Activated CD4-positive, alpha-beta T cell treated with anti-CD3 and anti-CD28 coated beads for 36 hours (primary cell): ENCODE measurements at regions of chr3 and their contacts with region 1.

Region 1: DNA sequence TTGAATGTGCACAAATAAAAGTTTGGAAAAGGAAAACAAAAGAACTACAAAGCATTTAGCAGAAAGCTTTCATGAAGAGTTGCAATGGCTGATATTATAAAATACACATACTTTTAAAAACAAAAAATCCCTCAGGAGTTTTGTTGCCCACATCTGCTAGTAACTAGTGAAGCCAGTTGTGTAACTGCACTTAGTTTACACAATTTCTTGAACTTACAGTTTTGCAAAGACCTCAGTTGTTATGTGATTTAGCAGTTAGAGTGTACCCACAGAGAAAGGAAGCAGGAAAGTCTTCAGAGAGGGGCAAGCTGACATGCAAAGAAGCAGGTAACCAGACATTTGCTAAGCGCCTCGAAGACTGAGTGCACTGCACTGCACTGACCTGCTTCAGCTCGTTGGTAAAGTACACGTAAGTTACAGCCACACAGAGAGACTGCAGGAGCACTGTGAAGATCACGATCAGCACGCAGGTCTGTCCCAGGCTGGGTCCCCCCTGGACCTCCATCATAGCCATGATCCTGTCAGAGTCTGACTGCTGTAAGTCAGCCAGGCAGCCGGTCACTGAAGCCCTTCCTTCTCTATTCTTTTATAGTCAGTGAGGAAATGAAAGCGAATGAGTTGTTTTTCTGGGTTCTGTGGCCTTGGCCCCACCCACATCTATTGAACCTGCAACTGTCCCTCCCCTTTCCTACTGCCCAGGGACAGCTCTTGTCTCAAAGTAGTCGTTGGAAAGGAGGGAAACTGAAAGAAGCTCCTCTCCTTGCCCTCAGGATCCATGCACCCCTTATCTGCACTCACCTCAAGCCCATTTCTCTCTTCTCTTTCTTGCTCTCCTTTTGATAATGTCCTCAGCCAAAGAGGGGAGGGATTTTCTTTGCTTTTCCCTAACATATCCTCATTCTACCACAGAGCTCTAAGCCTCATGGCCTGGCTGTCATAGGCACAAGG is at the start of gene TNFSF10:
- DNase-seq: peak; percentile 81
- ATAC-seq: peak; percentile 80
- H3K4me3 Mint-ChIP-seq: peak within 1 kb of the TSS; percentile 91
- H3K27ac Mint-ChIP-seq: peak within 1 kb of the TSS; percentile 95
- H3K4me1 Mint-ChIP-seq: peaks cover 50% of the 10 kb centered on the region
- H3K27me3 Mint-ChIP-seq: no peaks in the 10 kb centered on the region
- total RNA-seq, gene TNFSF10: 33.1 to 34.8 TPM

Region 2: DNA sequence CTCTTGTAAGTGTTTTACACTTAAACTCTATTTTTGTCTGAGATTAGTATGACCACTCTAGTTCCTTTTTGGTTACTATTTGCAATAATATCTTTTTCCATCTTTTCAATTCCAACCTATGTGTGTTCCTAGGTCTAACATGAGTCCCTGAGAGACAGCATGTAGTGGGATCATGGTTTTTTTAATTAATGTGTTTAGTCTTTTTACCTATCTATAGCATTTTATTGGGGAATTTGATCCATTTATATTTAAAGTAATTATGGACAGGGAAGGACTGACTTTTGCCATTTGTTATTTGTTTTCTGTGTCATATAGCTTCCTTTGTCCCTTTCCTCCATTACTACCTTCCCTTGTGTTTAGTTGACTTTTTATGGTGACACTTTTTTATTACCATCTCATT is 21.6 kb before region 1 on chr3:
- CTCF ChIA-PET with region 1: no interaction called
- POLR2A ChIA-PET with region 1: no interaction called
- intact Hi-C with region 1: no loop called
- DNase-seq: no peak
- ATAC-seq: no peak
- H3K4me3 Mint-ChIP-seq: no peak overlapping the region
- H3K27ac Mint-ChIP-seq: no peak overlapping the region
- H3K4me1 Mint-ChIP-seq: peaks cover 10% of the 10 kb centered on the region
- H3K27me3 Mint-ChIP-seq: no peaks in the 10 kb centered on the region

Region 3: DNA sequence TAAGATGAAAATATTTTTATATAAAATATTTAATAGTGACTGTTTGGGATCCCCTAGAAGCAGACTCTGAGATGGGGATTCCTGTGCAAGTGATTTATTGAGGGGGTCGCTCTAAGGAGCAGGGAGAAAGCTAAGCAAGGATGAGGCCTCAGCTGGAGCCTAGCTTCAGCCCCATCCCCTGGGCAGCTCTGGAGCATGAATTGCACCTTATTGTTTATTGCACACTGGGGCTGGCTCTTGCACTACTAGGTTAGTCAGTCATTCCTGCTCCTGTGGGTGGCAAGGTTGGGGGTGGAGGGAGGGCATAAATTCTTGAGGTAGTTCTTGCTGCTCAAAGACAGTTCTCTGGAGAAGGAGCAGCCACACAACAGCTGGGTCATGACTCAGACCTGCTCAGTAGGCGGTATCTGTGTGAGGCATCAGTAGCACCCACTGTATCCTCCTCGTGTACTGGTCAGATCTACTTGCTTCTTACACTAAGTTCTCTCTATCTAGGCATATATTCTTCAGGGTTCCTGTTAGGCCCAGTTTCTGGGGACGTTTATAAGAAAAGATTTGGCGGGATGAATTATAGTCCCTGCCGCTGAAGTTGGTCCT is 27.3 kb after region 1 on chr3:
- CTCF ChIA-PET with region 1: interaction called, 3 read pairs
- POLR2A ChIA-PET with region 1: no interaction called
- intact Hi-C with region 1: loop called in 1 of 2 experiments (anchors 2 kb)
- DNase-seq: peak; percentile 92
- ATAC-seq: peak; percentile 100
- H3K4me3 Mint-ChIP-seq: no peak overlapping the region
- H3K27ac Mint-ChIP-seq: peak overlapping the region; percentile 82
- H3K4me1 Mint-ChIP-seq: peaks cover 32% of the 10 kb centered on the region
- H3K27me3 Mint-ChIP-seq: no peaks in the 10 kb centered on the region

Region 4: GRCh38 chr3:172580680-172581401 is 57.7 kb after region 1 on chr3:
- CTCF ChIA-PET with region 1: interaction called, 3 read pairs
- POLR2A ChIA-PET with region 1: no interaction called
- intact Hi-C with region 1: loop called (anchors 1 kb)
- DNase-seq: no peak
- ATAC-seq: peak; percentile 62
- H3K4me3 Mint-ChIP-seq: peak overlapping the region; percentile 20
- H3K27ac Mint-ChIP-seq: peak overlapping the region; percentile 85
- H3K4me1 Mint-ChIP-seq: peaks cover 82% of the 10 kb centered on the region
- H3K27me3 Mint-ChIP-seq: no peaks in the 10 kb centered on the region

Region 5: DNA sequence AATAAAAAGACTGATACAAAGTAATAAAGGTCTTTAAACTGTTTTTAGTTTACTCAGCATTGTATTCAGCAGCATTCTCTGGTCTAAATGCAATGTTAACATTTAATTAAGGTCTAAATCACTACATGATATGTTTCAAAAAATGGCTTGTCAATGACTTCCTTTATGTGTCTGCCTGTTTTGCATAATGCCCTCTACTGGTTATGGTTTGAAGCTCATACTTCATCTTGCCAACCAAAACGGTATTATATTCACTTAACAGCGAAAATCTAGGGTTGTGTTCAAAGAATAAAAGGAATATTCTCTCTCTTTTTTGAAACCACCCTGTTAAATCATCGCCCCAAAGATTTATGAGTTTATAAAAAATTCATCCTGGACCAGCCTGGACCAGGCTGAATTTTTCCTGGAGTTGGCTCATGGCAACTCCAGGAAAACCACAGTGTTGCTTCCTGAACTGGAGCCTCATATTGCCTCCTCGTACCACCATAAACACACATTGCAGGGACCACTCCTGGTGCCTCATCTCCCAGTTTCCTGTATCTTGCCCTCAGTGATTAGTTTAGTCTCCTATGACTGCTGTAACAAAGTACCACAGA is 194.4 kb after region 1 on chr3:
- CTCF ChIA-PET with region 1: no interaction called
- POLR2A ChIA-PET with region 1: no interaction called
- intact Hi-C with region 1: no loop called
- DNase-seq: no peak
- ATAC-seq: peak; percentile 60
- H3K4me3 Mint-ChIP-seq: no peak overlapping the region
- H3K27ac Mint-ChIP-seq: no peak overlapping the region
- H3K4me1 Mint-ChIP-seq: no peaks in the 10 kb centered on the region
- H3K27me3 Mint-ChIP-seq: peaks cover 2% of the 10 kb centered on the region